Left cardiac atrium (tissue), 4 donors: ENCODE measurements at regions of chr16 and their contacts with region 1.

Region 1: DNA sequence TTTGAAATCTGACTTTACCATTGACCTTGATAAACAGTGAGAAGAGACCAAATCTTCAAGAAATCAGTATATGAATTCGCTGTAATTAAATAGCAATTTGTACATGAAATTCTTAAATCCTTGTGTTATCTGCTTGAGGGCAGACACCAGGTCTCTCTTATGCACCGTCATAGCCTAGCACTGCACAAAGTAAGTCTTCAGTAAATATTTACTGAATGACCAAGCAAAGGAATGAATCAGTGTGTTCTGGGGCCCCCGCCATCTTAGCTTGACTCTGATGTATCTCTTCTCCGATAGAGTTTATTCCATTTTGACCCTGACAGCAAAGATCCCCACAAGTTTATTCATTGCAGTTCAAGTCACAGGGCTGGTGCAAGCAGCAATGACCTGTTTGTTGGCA is 328.0 kb downstream of the TMEM114 start:
- DNase-seq: no peak
- ATAC-seq: no peak

Region 2: DNA sequence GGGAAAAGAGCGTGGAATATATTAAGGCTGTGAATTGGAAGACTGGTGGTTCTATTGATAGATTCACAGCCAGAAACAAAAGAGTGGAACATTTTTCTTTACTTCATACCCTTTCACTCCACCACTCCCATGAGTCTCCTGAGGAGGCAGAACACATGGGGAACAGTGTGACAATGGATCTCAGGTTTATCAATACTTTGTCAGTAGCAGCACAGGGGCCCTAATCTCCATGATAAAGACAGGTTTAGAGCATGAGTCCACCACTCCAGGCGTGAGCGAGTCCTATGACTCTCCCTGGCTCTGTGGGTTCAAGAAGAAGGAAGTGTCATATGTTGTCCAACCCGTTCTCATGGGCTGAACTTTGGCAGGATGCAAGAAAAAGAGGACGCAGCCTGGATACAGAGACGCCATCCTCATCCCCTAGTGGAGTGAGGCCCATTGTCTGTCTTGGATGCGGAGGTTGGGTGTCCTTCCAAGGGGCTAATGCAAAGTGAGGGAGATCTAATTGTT is 33.2 kb before region 1 on chr16:
- intact Hi-C with region 1: no loop called
- DNase-seq: no peak
- ATAC-seq: no peak

Region 3: GRCh38 chr16:8292271-8292670 is 30.0 kb after region 1 on chr16:
- intact Hi-C with region 1: no loop called
- DNase-seq: no peak
- ATAC-seq: no peak

Region 4: GRCh38 chr16:8326249-8326648 is 64.0 kb after region 1 on chr16:
- intact Hi-C with region 1: loop called in 1 of 2 experiments (anchors 10 kb)
- DNase-seq: no peak
- ATAC-seq: no peak

Region 5: DNA sequence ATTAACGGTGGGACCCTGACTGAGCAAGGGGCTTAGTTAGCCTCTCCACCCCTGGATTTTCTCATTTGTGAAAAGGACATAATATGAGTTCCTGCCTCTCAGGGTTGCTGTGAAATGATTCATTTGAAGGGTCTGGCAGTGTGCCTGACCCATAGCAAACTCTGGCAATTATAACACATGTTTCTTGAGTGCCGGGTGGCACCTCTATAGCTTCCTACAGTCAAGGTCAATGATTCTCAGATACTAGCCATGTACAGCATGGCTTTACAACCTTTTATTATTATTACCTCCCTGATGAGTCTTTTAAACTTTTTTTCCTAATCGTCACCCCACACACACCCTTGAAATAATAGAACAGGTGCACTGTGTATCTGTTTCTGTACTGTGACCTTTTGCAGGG is 285.9 kb after region 1 on chr16:
- intact Hi-C with region 1: no loop called
- DNase-seq: no peak
- ATAC-seq: no peak